ENCODE measurements at regions of chr2 and their contacts with region 1.

Region 1: DNA sequence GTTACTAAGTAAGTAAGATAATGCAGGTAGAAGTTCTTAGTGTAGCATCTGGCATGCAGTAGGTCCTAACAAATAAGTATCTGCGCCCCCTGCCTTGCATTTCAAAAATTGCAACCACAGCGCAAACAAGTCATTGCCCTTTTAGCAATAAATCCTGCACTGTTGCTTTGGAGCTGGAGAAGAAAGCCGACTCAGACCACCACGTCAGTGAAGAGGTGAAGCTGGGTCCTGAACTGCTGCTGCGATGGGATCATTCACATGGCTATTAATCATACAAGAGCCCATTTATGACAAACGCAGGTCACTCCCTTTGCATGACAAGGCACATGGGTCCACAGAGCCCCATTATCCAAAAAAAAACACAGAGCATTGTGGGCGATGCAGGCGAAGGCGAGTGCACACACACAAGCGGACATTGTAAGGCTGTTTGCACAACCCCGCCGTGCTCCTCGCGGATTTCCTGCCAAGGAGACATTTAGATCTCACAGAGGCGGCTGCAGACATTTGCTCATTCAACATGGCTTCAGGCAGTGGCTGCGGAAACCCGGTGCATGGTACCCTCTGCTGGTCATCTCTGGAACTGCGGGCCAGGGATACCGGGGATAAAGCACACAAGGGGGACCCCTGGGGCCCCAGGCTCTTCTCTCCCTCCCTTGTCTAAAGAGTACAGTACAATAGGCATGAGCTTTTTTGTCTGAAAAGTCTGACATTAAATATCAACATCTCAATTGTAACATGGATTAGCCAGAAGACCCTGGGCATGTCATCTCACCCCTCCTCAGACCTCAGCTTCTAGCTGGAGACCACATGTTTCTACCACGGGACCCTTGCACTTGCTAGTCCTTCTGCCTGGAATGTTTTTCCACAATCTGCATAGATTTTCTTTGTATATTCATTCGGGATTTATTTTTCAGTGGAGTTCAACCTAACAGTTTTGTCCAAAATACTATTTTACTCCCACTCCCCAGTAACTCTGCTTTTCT is 56.7 kb downstream of the CYRIA start:
- DNase-seq: peak; percentile 49 to 89
- H3K4me3 ChIP-seq: peak overlapping the region; percentile 50 to 60
- H3K27ac ChIP-seq: no peak overlapping the region
- H3K4me1 ChIP-seq: peaks cover 0 to 3% of the 10 kb centered on the region in 2 donors
- H3K27me3 ChIP-seq: no peaks in the 10 kb centered on the region
- CTCF ChIP-seq: peak; percentile 77 to 96 (median 95)

Region 2: DNA sequence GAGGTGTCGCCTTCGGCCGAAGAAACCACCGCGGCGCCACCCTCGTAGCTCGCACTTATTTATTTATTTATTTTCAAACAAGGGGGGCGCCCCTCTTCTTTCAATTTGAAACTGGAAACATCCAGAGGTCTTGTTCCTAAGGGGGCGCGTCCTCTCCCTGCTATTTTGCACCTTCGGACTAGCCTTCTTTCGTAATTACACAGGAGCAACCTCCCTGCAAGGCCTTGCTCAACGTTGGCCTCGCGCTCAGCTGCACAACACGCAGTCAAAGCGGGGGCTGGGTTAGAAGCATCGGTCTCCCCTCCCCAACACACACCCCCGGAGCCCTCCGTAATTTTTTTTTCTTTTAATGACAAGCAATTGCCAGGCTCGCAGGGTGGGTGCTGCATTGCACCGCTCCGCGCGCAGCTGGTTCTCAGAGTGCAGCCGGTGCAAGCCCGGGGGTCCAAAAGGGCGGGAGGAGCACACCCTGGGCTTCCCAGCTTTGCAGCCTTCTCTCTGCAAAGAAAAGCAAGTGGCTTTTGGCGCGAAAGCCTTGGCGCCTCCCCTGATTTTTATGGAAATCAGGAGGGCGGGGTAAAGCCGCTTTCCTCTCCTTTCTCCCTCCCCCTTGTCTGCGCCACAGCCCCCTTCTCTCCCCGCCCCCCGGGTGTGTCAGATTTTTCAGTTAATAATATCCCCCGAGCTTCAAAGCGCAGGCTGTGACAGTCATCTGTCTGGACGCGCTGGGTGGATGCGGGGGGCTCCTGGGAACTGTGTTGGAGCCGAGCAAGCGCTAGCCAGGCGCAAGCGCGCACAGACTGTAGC is 668.9 kb before region 1 on chr2 and contains the start of gene MYCN:
- intact Hi-C with region 1: loop called (anchors 10 kb)
- DNase-seq: no peak
- H3K4me3 ChIP-seq: peak within 1 kb of the TSS; percentile 53 to 61
- H3K27ac ChIP-seq: no peak within 1 kb of the TSS
- H3K4me1 ChIP-seq: peaks cover 2 to 22% of the 10 kb centered on the region in 2 donors
- H3K27me3 ChIP-seq: peaks cover 16% of the 10 kb centered on the region
- CTCF ChIP-seq: peak in 1 of 3 experiments; percentile 18
- total RNA-seq, gene MYCN: not detected

Region 3: GRCh38 chr2:16553226-16553625 is 55.7 kb before region 1 on chr2:
- intact Hi-C with region 1: loop called (anchors 2 kb)
- DNase-seq: no peak
- H3K4me3 ChIP-seq: no peak overlapping the region
- H3K27ac ChIP-seq: no peak overlapping the region
- H3K4me1 ChIP-seq: no peaks in the 10 kb centered on the region
- H3K27me3 ChIP-seq: no peaks in the 10 kb centered on the region
- CTCF ChIP-seq: peak; percentile 30 to 44 (median 40)

Region 4: GRCh38 chr2:16756831-16757644 is 148.1 kb after region 1 on chr2:
- intact Hi-C with region 1: loop called (anchors 2 kb)
- DNase-seq: peak in 1 of 2 donors; percentile 77
- H3K4me3 ChIP-seq: no peak overlapping the region
- H3K27ac ChIP-seq: no peak overlapping the region
- H3K4me1 ChIP-seq: no peaks in the 10 kb centered on the region
- H3K27me3 ChIP-seq: no peaks in the 10 kb centered on the region
- CTCF ChIP-seq: peak; percentile 76 to 87 (median 83)

Region 5: GRCh38 chr2:17124575-17125318 is 515.8 kb after region 1 on chr2:
- intact Hi-C with region 1: no loop called
- DNase-seq: no peak
- H3K4me3 ChIP-seq: no peak overlapping the region
- H3K27ac ChIP-seq: no peak overlapping the region
- H3K4me1 ChIP-seq: no peaks in the 10 kb centered on the region
- H3K27me3 ChIP-seq: no peaks in the 10 kb centered on the region
- CTCF ChIP-seq: no peak